Motor neuron (in vitro differentiated cells): ENCODE measurements at regions of chr10 and their contacts with region 1.

Region 1: DNA sequence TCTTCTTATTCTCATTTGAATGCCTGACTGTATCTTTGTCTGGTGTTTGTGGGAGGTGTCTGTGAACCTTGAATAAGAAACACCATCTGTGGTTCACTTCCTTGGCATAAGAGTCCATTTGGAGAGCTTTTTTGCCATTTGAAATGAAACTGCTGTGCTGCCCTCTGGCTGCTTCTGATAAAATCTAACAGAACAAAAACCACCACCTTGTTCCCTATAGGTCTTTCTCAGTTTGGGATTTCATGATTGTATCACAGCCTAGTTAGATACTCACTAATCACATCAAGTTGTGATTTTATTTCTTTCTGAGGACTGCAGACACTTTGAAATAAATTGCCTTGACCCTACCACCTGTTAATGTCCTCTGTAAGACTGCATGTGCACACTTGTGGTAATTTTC is 102.7 kb upstream of the FAM13C start:
- ATAC-seq: peak in 2 of 8 experiments; percentile 51 to 73
- H3K4me3 ChIP-seq: no peak overlapping the region
- H3K27ac ChIP-seq: no peak overlapping the region
- H3K4me1 ChIP-seq: no peaks in the 10 kb centered on the region

Region 2: DNA sequence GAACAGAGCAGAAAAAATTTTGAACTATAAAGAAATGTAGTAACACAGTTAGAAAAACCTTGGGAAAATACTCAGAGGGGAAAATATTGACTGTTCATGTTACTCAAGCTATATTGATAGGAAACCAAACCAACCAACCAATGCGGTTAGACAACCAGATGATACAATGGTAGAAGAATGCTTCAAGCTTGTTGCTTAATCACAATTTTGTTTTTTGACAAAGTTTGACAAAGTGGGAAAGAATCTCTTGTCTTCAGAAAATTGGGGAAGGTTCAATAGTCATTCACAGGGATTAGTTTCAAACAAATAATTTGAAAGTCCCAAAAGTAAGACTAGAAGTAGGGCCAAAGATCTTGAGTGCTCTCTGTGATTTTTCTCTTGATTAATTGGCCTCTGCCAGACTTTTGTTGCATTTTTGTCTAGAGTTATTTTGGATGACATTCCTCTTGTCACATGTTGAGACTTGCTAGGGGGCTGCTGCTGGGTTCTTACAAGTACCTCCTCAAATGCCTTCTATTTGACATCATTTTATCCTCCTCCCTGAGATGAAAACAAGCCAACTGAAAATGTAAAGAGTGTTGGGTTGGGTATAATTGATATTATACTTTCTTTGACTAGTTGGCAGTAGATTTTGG is 521.7 kb before region 1 on chr10:
- in situ Hi-C with region 1: loop called in 1 of 9 experiments (anchors 25 kb)
- ATAC-seq: no peak
- H3K4me3 ChIP-seq: no peak overlapping the region
- H3K27ac ChIP-seq: no peak overlapping the region
- H3K4me1 ChIP-seq: no peaks in the 10 kb centered on the region

Region 3: GRCh38 chr10:59397961-59398360 is 67.1 kb before region 1 on chr10:
- in situ Hi-C with region 1: no loop called
- ATAC-seq: no peak
- H3K4me3 ChIP-seq: no peak overlapping the region
- H3K27ac ChIP-seq: no peak overlapping the region
- H3K4me1 ChIP-seq: no peaks in the 10 kb centered on the region